Head of caudate nucleus (tissue), 42 donors: ENCODE measurements at regions of chr1 and their contacts with region 1.

Region 1: GRCh38 chr1:67500413-67500959 is 70.3 kb upstream of the SERBP1 start:
- DNase-seq: peak; percentile 53 to 92 (median 84)

Region 2: DNA sequence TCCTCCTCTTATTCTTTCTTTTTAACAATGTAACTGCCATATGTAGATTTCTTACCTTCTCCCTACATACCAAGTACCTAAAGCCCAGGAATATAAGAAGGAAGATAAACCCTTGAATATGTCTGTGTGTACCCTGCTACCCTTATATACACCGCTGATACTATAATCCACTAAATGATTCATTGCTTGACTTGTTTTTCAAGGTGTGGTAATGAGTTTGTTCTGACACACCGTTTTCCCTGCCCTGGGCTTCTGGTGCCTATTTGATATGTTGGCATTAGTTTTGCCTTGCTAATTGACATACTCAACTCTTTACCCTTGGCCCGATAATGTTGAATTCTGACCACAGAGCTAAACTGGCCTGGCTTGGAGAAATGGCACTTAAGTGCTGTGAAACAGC is 269.9 kb before region 1 on chr1:
- intact Hi-C with region 1: loop called (anchors 10 kb)
- DNase-seq: no peak